A549 (cell line): ENCODE measurements at regions of chr1 and their contacts with region 1.

Region 1: DNA sequence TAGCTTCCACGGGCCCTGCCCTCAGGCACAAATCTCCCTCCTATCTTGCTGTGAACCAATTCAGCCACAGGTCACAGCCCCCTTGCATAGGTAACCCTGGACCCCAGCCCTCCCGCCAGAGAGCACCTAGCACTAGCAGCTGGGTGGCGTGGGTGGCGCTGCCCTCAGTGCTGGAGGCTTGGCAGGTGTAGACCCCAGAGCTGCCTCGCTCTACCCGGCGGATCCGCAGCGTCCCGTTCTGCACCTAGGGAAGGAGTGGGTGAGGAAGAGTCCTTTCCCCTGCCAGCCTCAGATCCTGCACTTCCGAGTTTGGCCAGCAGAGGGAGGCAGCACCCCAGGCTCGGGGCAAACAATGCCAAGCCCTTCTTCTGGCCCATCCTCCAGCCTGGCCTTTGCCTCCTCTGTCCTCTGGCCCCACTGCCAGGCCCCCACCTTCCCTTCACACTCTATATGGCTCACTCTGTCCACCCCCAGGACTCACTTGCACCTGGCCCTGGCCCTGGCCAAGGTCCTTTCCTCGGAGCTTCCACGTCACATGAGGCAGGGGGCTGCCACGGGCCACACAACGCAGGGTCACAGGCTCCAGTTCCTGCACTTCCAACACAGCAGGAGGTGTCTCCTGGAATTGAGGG is 9.0 kb downstream of the IGSF9 start:
- DNase-seq: peak; percentile 59 to 84
- ATAC-seq: peak; percentile 76 to 91
- H3K4me3 ChIP-seq: no peak overlapping the region
- H3K27ac ChIP-seq: peak overlapping the region in 1 of 2 experiments; percentile 43; a peak in 3 of 6 replicates
- H3K4me1 ChIP-seq: peaks cover 20% of the 10 kb centered on the region
- CTCF ChIP-seq: peak; percentile 89
- EP300 ChIP-seq: no peak
- POLR2A ChIP-seq: no peak
- RAD21 ChIP-seq: peak; percentile 90 to 93

Region 2: DNA sequence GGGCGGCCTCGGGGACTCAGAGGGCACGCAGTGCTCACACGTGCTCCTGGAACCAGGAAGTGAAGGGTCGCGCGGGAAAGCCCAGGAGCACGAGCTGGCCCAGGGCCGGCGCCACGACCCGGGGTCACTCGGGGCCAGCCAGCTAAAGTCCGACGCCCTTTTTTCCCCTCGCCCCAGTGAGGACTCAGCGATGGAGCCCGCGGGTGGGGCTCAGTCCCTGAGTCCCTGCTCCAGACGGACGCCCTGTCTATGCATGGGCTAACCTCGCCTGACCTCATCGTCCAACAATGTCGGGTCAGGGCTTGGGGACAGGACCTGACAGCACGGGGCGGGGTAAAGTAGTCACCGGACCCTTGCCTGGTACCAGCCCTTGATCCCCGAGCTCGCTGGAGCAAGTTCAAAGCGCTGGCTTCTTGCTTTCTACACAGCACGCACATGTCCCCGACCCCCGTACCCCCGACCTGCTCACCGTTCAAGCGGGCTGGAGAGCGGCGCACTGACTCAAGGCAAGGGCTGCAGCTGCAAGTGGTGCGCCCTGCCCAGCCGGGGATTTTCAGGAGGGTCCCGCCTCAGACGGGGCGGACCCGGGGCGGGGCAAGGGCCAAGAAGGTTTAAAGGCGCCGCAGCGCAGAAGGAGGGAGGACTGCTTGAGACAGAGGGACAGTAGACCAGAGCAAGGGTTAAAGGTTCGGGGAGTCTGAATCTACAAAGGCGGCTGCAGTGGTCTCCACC is 11.2 kb before region 1 on chr1 and contains the start of gene TAGLN2:
- CTCF ChIA-PET with region 1: interaction called, 99 read pairs
- POLR2A ChIA-PET with region 1: interaction called, 5 read pairs
- DNase-seq: peak; percentile 92 to 96
- ATAC-seq: peak; percentile 67 to 84
- H3K4me3 ChIP-seq: peak within 1 kb of the TSS; percentile 87
- H3K27ac ChIP-seq: peak within 1 kb of the TSS; percentile 97 to 99
- H3K4me1 ChIP-seq: peaks cover 40% of the 10 kb centered on the region
- CTCF ChIP-seq: no peak
- EP300 ChIP-seq: no peak
- POLR2A ChIP-seq: peak; percentile 96
- RAD21 ChIP-seq: no peak
- polyA plus RNA-seq, gene TAGLN2: 533 and 536 TPM in 2 replicates

Region 3: GRCh38 chr1:160018900-160019299 is 82.5 kb after region 1 on chr1:
- CTCF ChIA-PET with region 1: interaction called, 665 read pairs
- POLR2A ChIA-PET with region 1: no interaction called
- DNase-seq: no peak
- ATAC-seq: peak in 1 of 2 experiments; percentile 51; a peak in 1 of 6 replicates
- H3K4me3 ChIP-seq: no peak overlapping the region
- H3K27ac ChIP-seq: no peak overlapping the region
- H3K4me1 ChIP-seq: peaks cover 17% of the 10 kb centered on the region; the same call in 2 of the 3 replicates
- CTCF ChIP-seq: no peak
- EP300 ChIP-seq: no peak
- POLR2A ChIP-seq: no peak
- RAD21 ChIP-seq: no peak